Caco-2 (cell line): ENCODE measurements at regions of chr7 and their contacts with region 1.

Region 1: DNA sequence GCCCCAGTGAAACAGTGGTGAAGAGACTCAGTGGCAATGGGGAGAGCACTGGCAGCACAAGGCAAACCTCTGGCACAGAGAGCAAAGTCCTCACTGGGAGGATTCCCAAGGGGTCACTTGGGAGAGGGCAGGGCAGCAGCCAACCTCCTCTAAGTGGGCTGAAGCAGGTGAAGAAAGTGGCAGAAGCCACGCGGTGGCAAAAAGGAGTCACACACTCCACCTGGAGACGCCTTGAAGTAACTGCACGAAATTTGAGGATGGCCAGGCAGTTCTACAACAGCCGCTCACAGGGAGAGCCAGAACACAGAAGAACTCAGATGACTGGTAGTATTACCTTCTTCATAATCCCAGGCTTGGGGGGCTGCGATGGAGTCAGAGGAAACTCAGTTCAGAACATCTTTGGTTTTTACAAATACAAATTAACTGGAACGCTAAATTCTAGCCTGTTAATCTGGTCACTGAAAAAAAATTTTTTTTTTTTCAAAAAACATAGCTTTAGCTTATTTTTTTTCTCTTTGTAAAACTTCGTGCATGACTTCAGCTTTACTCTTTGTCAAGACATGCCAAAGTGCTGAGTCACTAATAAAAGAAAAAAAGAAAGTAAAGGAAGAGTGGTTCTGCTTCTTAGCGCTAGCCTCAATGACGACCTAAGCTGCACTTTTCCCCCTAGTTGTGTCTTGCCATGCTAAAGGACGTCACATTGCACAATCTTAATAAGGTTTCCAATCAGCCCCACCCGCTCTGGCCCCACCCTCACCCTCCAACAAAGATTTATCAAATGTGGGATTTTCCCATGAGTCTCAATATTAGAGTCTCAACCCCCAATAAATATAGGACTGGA is 435 bp upstream of the IL6 start:
- DNase-seq: peak; percentile 73 to 75
- H3K4me3 ChIP-seq: no peak overlapping the region
- H3K4me3 Mint-ChIP-seq: no peak overlapping the region
- H3K27ac Mint-ChIP-seq: peak overlapping the region; percentile 46
- H3K4me1 ChIP-seq: peaks cover 16% of the 10 kb centered on the region
- H3K4me1 Mint-ChIP-seq: peaks cover 13% of the 10 kb centered on the region
- H3K27me3 ChIP-seq: no peaks in the 10 kb centered on the region
- H3K27me3 Mint-ChIP-seq: no peaks in the 10 kb centered on the region
- CTCF ChIP-seq: peak; percentile 69 to 75

Region 2: GRCh38 chr7:22577396-22578001 is 149.1 kb before region 1 on chr7:
- CTCF ChIA-PET with region 1: interaction called, 15 read pairs
- POLR2A ChIA-PET with region 1: no interaction called
- intact Hi-C with region 1: no loop called
- DNase-seq: peak; percentile 55 to 59
- H3K4me3 ChIP-seq: no peak overlapping the region
- H3K4me3 Mint-ChIP-seq: peak overlapping the region; percentile 30
- H3K27ac Mint-ChIP-seq: peak overlapping the region; percentile 75
- H3K4me1 ChIP-seq: peaks cover 63% of the 10 kb centered on the region
- H3K4me1 Mint-ChIP-seq: peaks cover 40% of the 10 kb centered on the region
- H3K27me3 ChIP-seq: no peaks in the 10 kb centered on the region
- H3K27me3 Mint-ChIP-seq: no peaks in the 10 kb centered on the region
- CTCF ChIP-seq: no peak

Region 3: GRCh38 chr7:22586786-22587140 is 139.8 kb before region 1 on chr7:
- CTCF ChIA-PET with region 1: interaction called, 6 read pairs
- POLR2A ChIA-PET with region 1: no interaction called
- intact Hi-C with region 1: loop called (anchors 1 kb)
- DNase-seq: peak; percentile 59 to 70
- H3K4me3 ChIP-seq: no peak overlapping the region
- H3K4me3 Mint-ChIP-seq: no peak overlapping the region
- H3K27ac Mint-ChIP-seq: peak overlapping the region; percentile 24
- H3K4me1 ChIP-seq: peaks cover 39% of the 10 kb centered on the region
- H3K4me1 Mint-ChIP-seq: peaks cover 32% of the 10 kb centered on the region
- H3K27me3 ChIP-seq: no peaks in the 10 kb centered on the region
- H3K27me3 Mint-ChIP-seq: no peaks in the 10 kb centered on the region
- CTCF ChIP-seq: peak; percentile 55

Region 4: GRCh38 chr7:22660732-22661131 is 65.8 kb before region 1 on chr7:
- CTCF ChIA-PET with region 1: no interaction called
- POLR2A ChIA-PET with region 1: no interaction called
- intact Hi-C with region 1: loop called (anchors 5 kb)
- DNase-seq: peak in 1 of 2 experiments; percentile 11
- H3K4me3 ChIP-seq: no peak overlapping the region
- H3K4me3 Mint-ChIP-seq: no peak overlapping the region
- H3K27ac Mint-ChIP-seq: no peak overlapping the region
- H3K4me1 ChIP-seq: no peaks in the 10 kb centered on the region
- H3K4me1 Mint-ChIP-seq: no peaks in the 10 kb centered on the region
- H3K27me3 ChIP-seq: no peaks in the 10 kb centered on the region
- H3K27me3 Mint-ChIP-seq: no peaks in the 10 kb centered on the region
- CTCF ChIP-seq: no peak

Region 5: DNA sequence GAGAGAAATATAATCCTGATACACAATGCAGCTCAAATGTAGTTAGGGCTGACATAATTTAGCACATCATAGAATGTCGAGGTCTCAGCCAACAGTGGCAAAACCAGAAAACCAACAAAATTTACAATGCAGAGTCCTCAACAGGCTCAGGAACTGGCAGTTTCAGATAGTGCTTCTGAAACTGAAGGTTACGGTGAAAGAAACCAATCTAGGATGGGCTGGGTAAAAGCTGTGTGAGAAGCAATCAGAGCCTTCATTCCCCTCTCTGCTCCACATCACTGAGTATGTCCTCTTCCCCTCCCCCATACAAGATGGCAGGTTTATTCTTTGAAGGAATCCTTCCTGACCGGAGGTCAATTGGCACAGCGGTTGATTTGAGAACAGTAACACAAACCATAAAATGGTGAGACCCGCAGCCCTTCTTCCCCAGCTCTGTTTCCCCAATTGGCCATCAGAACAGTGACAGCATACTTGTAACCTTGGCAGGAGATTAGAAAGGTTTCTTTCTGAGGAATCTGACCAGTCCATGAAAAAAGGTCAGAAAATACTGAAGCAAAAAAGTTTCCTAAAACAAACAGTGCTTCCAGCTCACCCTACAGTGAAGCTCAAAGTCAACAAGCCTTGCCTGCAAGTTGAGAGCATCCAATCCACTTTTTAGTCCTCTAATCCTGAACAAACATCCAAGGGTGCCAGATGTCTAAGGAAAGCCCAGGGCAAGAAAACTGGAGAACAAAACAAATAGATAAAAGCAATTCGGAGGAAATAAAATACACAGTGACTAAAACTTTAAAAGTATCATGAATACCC is 53.5 kb before region 1 on chr7:
- CTCF ChIA-PET with region 1: interaction called, 5 read pairs
- POLR2A ChIA-PET with region 1: no interaction called
- intact Hi-C with region 1: loop called (anchors 5 kb)
- DNase-seq: peak; percentile 81 to 82
- H3K4me3 ChIP-seq: no peak overlapping the region
- H3K4me3 Mint-ChIP-seq: peak overlapping the region; percentile 39
- H3K27ac Mint-ChIP-seq: peak overlapping the region; percentile 78
- H3K4me1 ChIP-seq: peaks cover 57% of the 10 kb centered on the region
- H3K4me1 Mint-ChIP-seq: peaks cover 30% of the 10 kb centered on the region
- H3K27me3 ChIP-seq: no peaks in the 10 kb centered on the region
- H3K27me3 Mint-ChIP-seq: no peaks in the 10 kb centered on the region
- CTCF ChIP-seq: no peak

Region 6: GRCh38 chr7:22793593-22794462 is 67.3 kb after region 1 on chr7:
- CTCF ChIA-PET with region 1: no interaction called
- POLR2A ChIA-PET with region 1: no interaction called
- intact Hi-C with region 1: no loop called
- DNase-seq: no peak
- H3K4me3 ChIP-seq: no peak overlapping the region
- H3K4me3 Mint-ChIP-seq: no peak overlapping the region
- H3K27ac Mint-ChIP-seq: no peak overlapping the region
- H3K4me1 ChIP-seq: peaks cover 12% of the 10 kb centered on the region
- H3K4me1 Mint-ChIP-seq: peaks cover 6% of the 10 kb centered on the region
- H3K27me3 ChIP-seq: no peaks in the 10 kb centered on the region
- H3K27me3 Mint-ChIP-seq: no peaks in the 10 kb centered on the region
- CTCF ChIP-seq: no peak

Region 7: GRCh38 chr7:22854158-22855048 is 127.8 kb after region 1 on chr7:
- CTCF ChIA-PET with region 1: no interaction called
- POLR2A ChIA-PET with region 1: no interaction called
- intact Hi-C with region 1: loop called (anchors 5 kb)
- DNase-seq: peak; percentile 78
- H3K4me3 ChIP-seq: peak overlapping the region; percentile 57
- H3K4me3 Mint-ChIP-seq: peak overlapping the region; percentile 85
- H3K27ac Mint-ChIP-seq: peak overlapping the region; percentile 80
- H3K4me1 ChIP-seq: peaks cover 22% of the 10 kb centered on the region
- H3K4me1 Mint-ChIP-seq: peaks cover 21% of the 10 kb centered on the region
- H3K27me3 ChIP-seq: no peaks in the 10 kb centered on the region
- H3K27me3 Mint-ChIP-seq: no peaks in the 10 kb centered on the region
- CTCF ChIP-seq: peak in 1 of 2 experiments; percentile 80

Region 8: GRCh38 chr7:22980422-22980821 is 253.9 kb after region 1 on chr7:
- CTCF ChIA-PET with region 1: no interaction called
- POLR2A ChIA-PET with region 1: no interaction called
- intact Hi-C with region 1: no loop called
- DNase-seq: no peak
- H3K4me3 ChIP-seq: no peak overlapping the region
- H3K4me3 Mint-ChIP-seq: no peak overlapping the region
- H3K27ac Mint-ChIP-seq: no peak overlapping the region
- H3K4me1 ChIP-seq: no peaks in the 10 kb centered on the region
- H3K4me1 Mint-ChIP-seq: no peaks in the 10 kb centered on the region
- H3K27me3 ChIP-seq: no peaks in the 10 kb centered on the region
- H3K27me3 Mint-ChIP-seq: no peaks in the 10 kb centered on the region
- CTCF ChIP-seq: no peak

Region 9: GRCh38 chr7:23055582-23056178 is 329.1 kb after region 1 on chr7:
- CTCF ChIA-PET with region 1: interaction called, 4 read pairs
- POLR2A ChIA-PET with region 1: no interaction called
- intact Hi-C with region 1: loop called (anchors 1 kb)
- DNase-seq: peak; percentile 63 to 74
- H3K4me3 ChIP-seq: no peak overlapping the region
- H3K4me3 Mint-ChIP-seq: no peak overlapping the region
- H3K27ac Mint-ChIP-seq: no peak overlapping the region
- H3K4me1 ChIP-seq: peaks cover 10% of the 10 kb centered on the region; the same call in 1 of the 2 replicates
- H3K4me1 Mint-ChIP-seq: peaks cover 24% of the 10 kb centered on the region
- H3K27me3 ChIP-seq: no peaks in the 10 kb centered on the region
- H3K27me3 Mint-ChIP-seq: no peaks in the 10 kb centered on the region
- CTCF ChIP-seq: peak; percentile 86 to 91